ENCODE measurements at regions of chr17 and their contacts with region 1.

Region 1: DNA sequence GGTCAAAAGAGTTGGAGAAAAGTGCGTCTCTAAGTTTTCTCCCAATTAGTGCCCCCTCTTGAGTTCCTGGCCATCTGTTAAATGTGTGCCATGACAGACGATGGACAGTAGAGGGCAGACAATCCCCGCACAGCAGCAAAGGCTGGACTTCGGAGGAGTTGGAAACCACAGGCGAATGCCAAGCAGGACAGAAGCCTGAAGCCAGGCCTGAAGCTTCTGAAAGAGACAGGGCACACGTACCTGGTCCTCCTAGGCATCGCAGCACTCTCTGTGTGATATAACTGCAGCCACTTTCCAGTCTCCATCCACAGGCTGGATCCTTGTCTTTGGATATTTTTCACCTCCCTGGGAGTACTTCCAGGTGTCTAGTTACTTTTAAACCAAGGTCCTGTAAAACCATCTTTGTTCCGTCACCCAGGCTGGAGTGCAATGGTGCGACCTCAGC is 14.5 kb downstream of the C17orf100 start:
- DNase-seq: peak in 3 of 9 donors; percentile 22 to 34 (median 24)
- ATAC-seq: peak; percentile 87
- H3K4me3 ChIP-seq: no peak overlapping the region
- H3K4me3 Mint-ChIP-seq: no peak overlapping the region
- H3K27ac ChIP-seq: no peak overlapping the region
- H3K27ac Mint-ChIP-seq: no peak overlapping the region
- H3K4me1 ChIP-seq: no peaks in the 10 kb centered on the region
- H3K4me1 Mint-ChIP-seq: peaks cover 5 to 25% (median 10%) of the 10 kb centered on the region in 7 donors
- H3K27me3 ChIP-seq: no peaks in the 10 kb centered on the region
- H3K27me3 Mint-ChIP-seq: peaks cover 0 to 15% (median 0%) of the 10 kb centered on the region in 5 donors

Region 2: GRCh38 chr17:6753006-6753445 is 86.9 kb after region 1 on chr17:
- CTCF ChIA-PET with region 1: no interaction called
- POLR2A ChIA-PET with region 1: no interaction called
- intact Hi-C with region 1: loop called in 1 of 2 experiments (anchors 5 kb)
- DNase-seq: peak in 6 of 9 donors; percentile 4 to 53 (median 36)
- ATAC-seq: no peak
- H3K4me3 ChIP-seq: no peak overlapping the region
- H3K4me3 Mint-ChIP-seq: peak overlapping the region; percentile 13 to 66 (median 44)
- H3K27ac ChIP-seq: peak overlapping the region; percentile 26
- H3K27ac Mint-ChIP-seq: peak overlapping the region; percentile 24 to 100 (median 86)
- H3K4me1 ChIP-seq: peaks cover 26 to 30% of the 10 kb centered on the region in 2 donors
- H3K4me1 Mint-ChIP-seq: peaks cover 37 to 60% (median 48%) of the 10 kb centered on the region in 7 donors
- H3K27me3 ChIP-seq: no peaks in the 10 kb centered on the region
- H3K27me3 Mint-ChIP-seq: peaks cover 0 to 18% (median 0%) of the 10 kb centered on the region in 5 donors

Region 3: DNA sequence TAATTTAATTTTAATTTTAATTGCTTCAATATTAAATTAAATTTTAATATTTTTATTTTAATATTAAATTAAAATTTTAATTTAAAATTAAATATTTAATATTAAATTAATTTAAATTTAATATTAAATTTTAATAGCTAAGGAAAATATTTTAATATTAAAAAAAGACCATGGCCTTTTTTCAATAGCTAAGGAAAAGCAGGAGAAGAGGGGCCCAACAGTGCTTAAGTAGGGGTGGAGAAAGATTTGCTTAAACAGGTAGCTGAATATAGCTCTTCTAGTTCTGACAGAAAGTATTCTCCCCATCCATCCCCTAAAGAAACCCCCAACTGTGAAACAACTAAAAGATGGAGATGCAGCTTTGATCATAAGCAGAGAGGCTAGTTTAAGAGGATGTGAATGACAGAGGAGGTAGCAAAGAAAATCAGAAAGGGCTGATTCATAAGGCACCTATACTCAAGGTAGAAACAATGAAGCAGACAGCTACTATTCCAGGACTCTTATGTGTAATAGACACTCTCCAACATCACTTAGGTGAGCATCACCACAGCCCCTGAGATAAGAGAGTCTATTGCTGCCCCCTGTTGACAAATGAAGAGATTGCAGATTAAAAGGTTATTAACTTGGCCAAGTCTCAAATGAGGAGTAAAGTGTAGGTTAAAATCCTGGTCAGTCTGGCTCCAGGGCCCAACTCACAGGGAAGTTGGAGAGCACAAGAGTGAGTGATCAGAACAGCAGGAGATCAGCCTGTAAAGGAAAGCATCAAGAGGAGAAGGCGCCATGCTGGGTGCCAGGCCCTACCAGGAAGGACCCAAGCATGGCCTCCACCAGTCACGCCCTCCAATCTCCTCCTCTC is 338.5 kb after region 1 on chr17:
- CTCF ChIA-PET with region 1: interaction called, 5 read pairs
- POLR2A ChIA-PET with region 1: no interaction called
- intact Hi-C with region 1: loop called in 1 of 2 experiments (anchors 5 kb)
- DNase-seq: peak in 7 of 9 donors; percentile 67 to 80 (median 77)
- ATAC-seq: peak; percentile 98
- H3K4me3 ChIP-seq: no peak overlapping the region
- H3K4me3 Mint-ChIP-seq: no peak overlapping the region
- H3K27ac ChIP-seq: no peak overlapping the region
- H3K27ac Mint-ChIP-seq: peak overlapping the region in 8 of 9 donors; percentile 5 to 60 (median 31)
- H3K4me1 ChIP-seq: no peaks in the 10 kb centered on the region
- H3K4me1 Mint-ChIP-seq: peaks cover 14 to 42% (median 27%) of the 10 kb centered on the region in 7 donors
- H3K27me3 ChIP-seq: no peaks in the 10 kb centered on the region
- H3K27me3 Mint-ChIP-seq: no peaks in the 10 kb centered on the region

Measured in naive thymus-derived CD4-positive, alpha-beta T cell (primary cell).